Activated CD4-positive, alpha-beta memory T cell treated with anti-CD3 and anti-CD28 coated beads for 36 hours (primary cell): ENCODE measurements at regions of chr16 and their contacts with region 1.

Region 1: GRCh38 chr16:67017810-67018488 is 11.0 kb upstream of the CBFB start:
- DNase-seq: peak; percentile 95
- H3K4me3 Mint-ChIP-seq: no peak overlapping the region
- H3K27ac Mint-ChIP-seq: no peak overlapping the region
- H3K4me1 Mint-ChIP-seq: peaks cover 19% of the 10 kb centered on the region
- H3K27me3 Mint-ChIP-seq: no peaks in the 10 kb centered on the region

Region 2: DNA sequence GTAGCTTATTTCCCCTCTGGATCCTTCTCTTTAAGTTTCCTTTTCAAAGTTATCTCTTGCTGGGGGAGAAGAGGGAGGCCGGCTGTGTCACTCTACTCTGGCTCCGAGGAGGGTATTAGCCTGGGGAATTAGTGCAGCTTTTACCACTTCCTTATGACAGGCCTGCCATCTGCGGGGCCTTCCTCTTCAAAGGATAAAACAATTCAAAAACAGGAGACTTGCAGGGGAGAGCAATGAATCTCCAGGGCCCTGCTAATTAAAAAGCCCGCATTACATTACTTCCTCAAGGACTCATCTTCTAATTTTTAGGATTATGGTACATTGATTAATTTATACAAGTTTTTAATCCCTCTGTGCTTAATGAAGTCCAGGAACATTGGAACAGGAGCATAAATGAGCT is 842.3 kb before region 1 on chr16:
- CTCF ChIA-PET with region 1: no interaction called
- POLR2A ChIA-PET with region 1: no interaction called
- intact Hi-C with region 1: no loop called
- DNase-seq: no peak
- H3K4me3 Mint-ChIP-seq: no peak overlapping the region
- H3K27ac Mint-ChIP-seq: no peak overlapping the region
- H3K4me1 Mint-ChIP-seq: no peaks in the 10 kb centered on the region
- H3K27me3 Mint-ChIP-seq: peaks cover 3% of the 10 kb centered on the region

Region 3: GRCh38 chr16:66961065-66961744 is 56.7 kb before region 1 on chr16 and contains the start of gene CES3:
- CTCF ChIA-PET with region 1: interaction called, 11 read pairs
- POLR2A ChIA-PET with region 1: no interaction called
- intact Hi-C with region 1: no loop called
- DNase-seq: peak; percentile 83
- H3K4me3 Mint-ChIP-seq: peak within 1 kb of the TSS; percentile 42
- H3K27ac Mint-ChIP-seq: no peak within 1 kb of the TSS
- H3K4me1 Mint-ChIP-seq: peaks cover 18% of the 10 kb centered on the region
- H3K27me3 Mint-ChIP-seq: no peaks in the 10 kb centered on the region
- total RNA-seq, gene CES3: 1.6 to 3.0 TPM

Region 4: DNA sequence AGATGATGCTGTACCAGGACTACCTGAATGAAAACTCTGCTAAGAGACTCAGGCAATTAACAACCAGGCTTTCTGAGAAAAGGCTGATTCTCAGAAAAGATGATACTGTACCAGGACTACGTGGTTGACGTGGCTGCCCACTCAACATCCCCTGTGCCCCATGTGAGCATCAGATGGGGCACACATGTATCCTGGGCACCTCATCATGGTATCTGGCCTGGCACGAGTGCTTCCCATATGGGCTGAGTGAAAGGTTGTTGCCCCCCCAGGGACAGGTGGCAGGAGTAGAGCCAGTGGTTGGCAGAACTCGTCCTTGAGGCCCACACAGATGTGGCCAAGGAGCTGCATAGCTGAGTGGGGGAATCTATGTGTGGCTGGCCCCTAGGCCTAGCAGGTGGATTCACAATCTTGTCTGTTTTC is 33.0 kb before region 1 on chr16:
- CTCF ChIA-PET with region 1: interaction called, 24 read pairs
- POLR2A ChIA-PET with region 1: interaction called, 24 read pairs
- intact Hi-C with region 1: loop called (anchors 1 kb)
- DNase-seq: peak; percentile 91
- H3K4me3 Mint-ChIP-seq: peak overlapping the region; percentile 55
- H3K27ac Mint-ChIP-seq: peak overlapping the region; percentile 100
- H3K4me1 Mint-ChIP-seq: peaks cover 63% of the 10 kb centered on the region
- H3K27me3 Mint-ChIP-seq: no peaks in the 10 kb centered on the region

Region 5: GRCh38 chr16:67006930-67007658 is 10.9 kb before region 1 on chr16:
- CTCF ChIA-PET with region 1: interaction called, 10 read pairs
- POLR2A ChIA-PET with region 1: no interaction called
- intact Hi-C with region 1: no loop called
- DNase-seq: peak; percentile 47
- H3K4me3 Mint-ChIP-seq: no peak overlapping the region
- H3K27ac Mint-ChIP-seq: peak overlapping the region; percentile 58
- H3K4me1 Mint-ChIP-seq: peaks cover 34% of the 10 kb centered on the region
- H3K27me3 Mint-ChIP-seq: no peaks in the 10 kb centered on the region

Region 6: DNA sequence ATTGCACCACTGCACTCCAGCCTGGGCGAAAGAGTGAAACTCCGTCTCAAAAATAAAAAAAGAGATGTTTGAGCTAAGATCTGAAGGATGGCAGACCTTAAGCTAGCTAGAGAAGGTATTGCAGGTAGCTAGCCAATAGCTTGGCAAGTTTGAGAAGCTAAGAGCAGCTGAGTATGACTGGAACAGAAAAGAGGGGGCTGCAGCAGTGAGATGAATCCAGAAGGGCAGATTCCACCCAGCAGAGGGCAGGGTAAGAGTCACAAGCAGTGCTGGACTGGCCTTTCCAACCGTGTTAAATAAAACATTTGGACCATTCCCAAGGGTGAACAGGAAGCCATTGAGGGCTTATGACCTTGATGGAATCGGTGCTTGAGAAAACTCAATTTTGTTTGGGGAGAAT is 86.1 kb after region 1 on chr16:
- CTCF ChIA-PET with region 1: interaction called, 103 read pairs
- POLR2A ChIA-PET with region 1: interaction called, 3 read pairs
- intact Hi-C with region 1: loop called (anchors 1 kb)
- DNase-seq: no peak
- H3K4me3 Mint-ChIP-seq: peak overlapping the region; percentile 0
- H3K27ac Mint-ChIP-seq: no peak overlapping the region
- H3K4me1 Mint-ChIP-seq: peaks cover 7% of the 10 kb centered on the region
- H3K27me3 Mint-ChIP-seq: no peaks in the 10 kb centered on the region

Region 7: DNA sequence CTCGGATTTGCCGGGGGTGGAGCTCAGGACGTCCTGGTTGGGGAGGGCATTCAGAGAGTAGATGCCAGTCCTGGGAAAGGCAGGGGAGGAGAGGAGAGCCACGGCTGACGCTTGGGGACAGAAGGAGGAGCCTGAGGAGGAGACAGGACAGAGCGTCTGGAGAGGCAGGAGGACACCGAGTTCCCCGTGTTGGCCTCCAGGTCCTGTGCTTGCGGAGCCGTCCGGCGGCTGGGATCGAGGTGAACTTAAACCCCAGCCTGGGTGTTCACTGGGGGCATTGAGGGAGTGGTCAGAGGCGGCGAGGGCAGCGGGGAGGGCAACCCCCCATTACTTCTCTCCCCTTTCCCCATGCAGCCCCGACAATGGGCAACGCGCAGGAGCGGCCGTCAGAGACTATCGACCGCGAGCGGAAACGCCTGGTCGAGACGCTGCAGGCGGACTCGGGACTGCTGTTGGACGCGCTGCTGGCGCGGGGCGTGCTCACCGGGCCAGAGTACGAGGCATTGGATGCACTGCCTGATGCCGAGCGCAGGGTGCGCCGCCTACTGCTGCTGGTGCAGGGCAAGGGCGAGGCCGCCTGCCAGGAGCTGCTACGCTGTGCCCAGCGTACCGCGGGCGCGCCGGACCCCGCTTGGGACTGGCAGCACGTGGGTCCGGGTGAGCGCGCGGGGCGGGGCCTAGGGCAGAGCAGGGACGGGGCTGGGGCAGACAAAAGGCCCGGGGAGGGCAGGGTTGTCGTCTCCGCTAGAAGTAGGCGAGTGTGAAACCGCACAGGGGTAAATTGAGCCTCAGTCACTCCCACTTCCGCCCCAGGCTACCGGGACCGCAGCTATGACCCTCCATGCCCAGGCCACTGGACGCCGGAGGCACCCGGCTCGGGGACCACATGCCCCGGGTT is 156.1 kb after region 1 on chr16:
- CTCF ChIA-PET with region 1: interaction called, 17 read pairs
- POLR2A ChIA-PET with region 1: no interaction called
- intact Hi-C with region 1: no loop called
- DNase-seq: peak; percentile 79
- H3K4me3 Mint-ChIP-seq: peak overlapping the region; percentile 64
- H3K27ac Mint-ChIP-seq: no peak overlapping the region
- H3K4me1 Mint-ChIP-seq: peaks cover 42% of the 10 kb centered on the region
- H3K27me3 Mint-ChIP-seq: peaks cover 25% of the 10 kb centered on the region

Region 8: DNA sequence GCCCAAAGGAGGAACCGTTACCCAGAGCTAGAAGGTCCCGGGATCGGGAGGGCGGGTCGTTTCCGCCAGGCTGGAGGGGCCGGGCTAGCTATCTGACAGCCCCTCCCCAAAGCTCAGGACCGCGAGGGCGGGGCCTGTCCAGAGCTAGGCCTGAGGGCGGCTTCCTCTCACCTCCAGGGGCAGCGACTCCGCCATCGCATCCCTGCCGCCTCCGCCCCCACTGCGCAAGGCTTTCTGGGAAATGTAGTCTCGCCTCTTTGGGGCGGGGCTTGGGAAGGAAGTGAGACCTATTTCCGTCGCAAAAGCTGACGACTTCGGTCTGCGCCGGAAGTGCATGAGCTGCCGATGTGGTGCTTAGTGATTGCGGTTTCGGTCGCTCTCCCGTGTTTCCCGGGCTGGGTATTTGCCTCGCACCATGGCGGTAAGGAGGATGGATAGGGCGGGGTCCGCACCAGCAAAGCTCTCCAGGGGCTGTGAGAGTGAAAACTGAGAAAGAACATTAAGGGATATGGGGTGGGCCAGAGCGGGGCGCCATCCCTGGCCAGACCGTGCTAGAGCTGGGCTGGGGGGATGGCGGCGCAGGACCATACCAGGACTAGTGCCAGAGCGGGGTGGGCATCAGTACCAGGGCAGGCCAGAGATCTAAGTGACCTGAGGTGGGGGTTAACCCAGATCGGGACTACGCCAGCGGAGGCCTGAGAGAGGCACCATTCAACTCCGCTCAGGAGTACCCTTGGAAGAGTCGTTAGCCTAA is 209.0 kb after region 1 on chr16 and contains the start of gene TMEM208:
- CTCF ChIA-PET with region 1: interaction called, 15 read pairs
- POLR2A ChIA-PET with region 1: no interaction called
- intact Hi-C with region 1: no loop called
- DNase-seq: peak; percentile 99
- H3K4me3 Mint-ChIP-seq: peak within 1 kb of the TSS; percentile 98
- H3K27ac Mint-ChIP-seq: peak within 1 kb of the TSS; percentile 95
- H3K4me1 Mint-ChIP-seq: peaks cover 48% of the 10 kb centered on the region
- H3K27me3 Mint-ChIP-seq: no peaks in the 10 kb centered on the region
- total RNA-seq, gene TMEM208: 36.7 to 39.3 TPM

Region 9: GRCh38 chr16:67326472-67327309 is 308.7 kb after region 1 on chr16 and contains the starts of genes KCTD19 and LRRC36:
- CTCF ChIA-PET with region 1: no interaction called
- POLR2A ChIA-PET with region 1: no interaction called
- intact Hi-C with region 1: no loop called
- DNase-seq: peak; percentile 78
- H3K4me3 Mint-ChIP-seq: peak within 1 kb of the TSS; percentile 76
- H3K27ac Mint-ChIP-seq: no peak within 1 kb of the TSS
- H3K4me1 Mint-ChIP-seq: peaks cover 5% of the 10 kb centered on the region
- H3K27me3 Mint-ChIP-seq: peaks cover 42% of the 10 kb centered on the region
- total RNA-seq, gene KCTD19: 1.2 to 2.5 TPM
- total RNA-seq, gene LRRC36: 0.63 to 1.00 TPM